Heart right ventricle (tissue), 16 donors: ENCODE measurements at regions of chr7 and their contacts with region 1.

Region 1: DNA sequence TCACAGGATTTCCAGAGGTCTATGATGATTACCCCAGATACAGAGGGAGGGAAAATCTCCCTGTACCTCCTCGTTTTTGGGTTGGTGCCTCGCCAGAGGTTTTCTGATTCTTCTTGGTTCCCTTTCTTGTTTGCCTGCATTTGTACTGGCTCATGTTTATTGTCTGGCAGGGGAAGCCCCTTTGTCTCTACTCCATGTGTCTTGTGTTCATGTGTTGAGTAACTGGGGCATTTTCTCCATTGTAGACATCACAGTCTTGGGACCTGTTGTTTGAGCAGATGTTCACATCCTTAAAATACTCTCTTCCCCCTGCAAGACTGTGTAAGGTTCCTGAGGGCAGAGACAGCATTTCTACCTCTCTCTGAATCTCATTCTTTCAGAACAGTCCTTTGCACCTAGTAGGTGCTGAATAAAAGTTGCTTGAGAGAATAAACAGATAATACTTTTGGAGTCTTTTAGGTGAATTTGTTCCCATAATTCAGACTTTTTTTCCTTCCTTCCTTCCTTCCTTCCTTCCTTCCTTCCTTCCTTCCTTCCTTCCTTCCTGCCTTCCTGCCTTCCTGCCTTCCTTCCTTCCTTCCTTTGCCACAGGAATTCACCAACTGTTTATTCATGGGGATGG is 25.1 kb downstream of the CDK14 start:
- DNase-seq: no peak
- ATAC-seq: peak in 1 of 8 donors; percentile 7
- H3K4me3 ChIP-seq: no peak overlapping the region
- H3K27ac ChIP-seq: no peak overlapping the region
- H3K4me1 ChIP-seq: peaks cover 4 to 59% (median 36%) of the 10 kb centered on the region in 9 donors
- H3K27me3 ChIP-seq: no peaks in the 10 kb centered on the region
- CTCF ChIP-seq: no peak

Region 2: GRCh38 chr7:90574146-90574819 is 47.0 kb before region 1 on chr7:
- intact Hi-C with region 1: loop called in 1 of 10 experiments (anchors 5 kb)
- DNase-seq: peak; percentile 26 to 52
- ATAC-seq: peak; percentile 83 to 98 (median 91)
- H3K4me3 ChIP-seq: no peak overlapping the region
- H3K27ac ChIP-seq: peak overlapping the region in 8 of 10 donors; percentile 18 to 76 (median 48)
- H3K4me1 ChIP-seq: peaks cover 0 to 19% (median 4%) of the 10 kb centered on the region in 9 donors
- H3K27me3 ChIP-seq: no peaks in the 10 kb centered on the region
- CTCF ChIP-seq: no peak

Region 3: DNA sequence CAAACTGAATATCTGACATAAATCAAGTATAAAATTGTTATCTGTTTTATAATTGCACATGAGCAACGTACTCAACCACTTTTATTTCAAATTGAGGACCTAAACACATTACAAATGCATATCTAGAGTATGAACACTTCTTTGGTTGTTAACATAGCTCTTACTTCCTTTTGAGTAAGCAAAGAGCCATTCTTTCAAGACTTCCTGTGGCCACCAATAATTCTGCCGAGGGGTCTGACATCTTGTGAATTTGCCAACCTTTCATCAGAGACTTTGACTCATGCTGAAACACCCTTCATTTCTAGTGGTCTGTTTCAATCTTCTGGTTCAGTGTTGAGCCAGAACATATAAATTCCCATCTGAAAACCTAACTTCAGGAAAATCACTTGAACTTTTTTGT is 34.3 kb after region 1 on chr7:
- intact Hi-C with region 1: no loop called
- DNase-seq: no peak
- ATAC-seq: no peak
- H3K4me3 ChIP-seq: no peak overlapping the region
- H3K27ac ChIP-seq: no peak overlapping the region
- H3K4me1 ChIP-seq: peaks cover 0 to 13% (median 7%) of the 10 kb centered on the region in 9 donors
- H3K27me3 ChIP-seq: no peaks in the 10 kb centered on the region
- CTCF ChIP-seq: no peak

Region 4: DNA sequence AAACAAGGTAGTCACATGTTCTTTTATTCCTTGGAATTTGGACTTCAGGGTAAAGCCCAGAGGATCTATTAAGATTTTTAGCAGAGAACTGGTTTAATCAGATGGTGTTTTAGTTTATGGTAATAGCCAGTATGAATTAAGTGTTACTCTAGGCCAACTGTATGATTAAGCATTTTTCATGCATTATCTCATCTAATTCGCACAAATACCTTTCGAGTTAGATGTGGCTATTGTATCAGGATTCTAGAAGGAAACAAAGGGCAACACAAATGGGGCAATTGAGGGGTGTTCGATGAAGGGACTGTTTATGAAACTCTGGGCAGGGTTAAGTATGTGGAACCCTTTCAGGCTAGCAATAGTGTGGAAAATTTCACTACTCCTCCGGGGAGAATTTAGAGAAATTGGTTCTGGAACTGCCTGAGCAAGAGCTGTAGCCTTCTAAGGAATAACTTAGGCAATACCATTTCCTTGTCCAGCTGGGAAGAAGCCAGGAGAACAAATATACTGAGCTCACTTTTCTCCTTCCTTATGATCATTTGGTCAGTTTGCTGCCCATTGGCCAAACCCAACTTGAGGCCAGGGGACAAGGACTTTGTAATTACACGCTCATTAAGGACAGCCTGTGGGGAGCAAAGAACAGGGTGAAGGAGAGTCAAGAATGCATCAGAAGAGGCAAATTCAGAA is 324.0 kb after region 1 on chr7:
- intact Hi-C with region 1: no loop called
- DNase-seq: peak in 1 of 2 donors; percentile 14
- ATAC-seq: peak in 7 of 8 donors; percentile 39 to 82 (median 65)
- H3K4me3 ChIP-seq: no peak overlapping the region
- H3K27ac ChIP-seq: peak overlapping the region in 3 of 10 donors; percentile 2 to 52 (median 23)
- H3K4me1 ChIP-seq: peaks cover 0 to 15% (median 0%) of the 10 kb centered on the region in 9 donors
- H3K27me3 ChIP-seq: no peaks in the 10 kb centered on the region
- CTCF ChIP-seq: no peak

Region 5: DNA sequence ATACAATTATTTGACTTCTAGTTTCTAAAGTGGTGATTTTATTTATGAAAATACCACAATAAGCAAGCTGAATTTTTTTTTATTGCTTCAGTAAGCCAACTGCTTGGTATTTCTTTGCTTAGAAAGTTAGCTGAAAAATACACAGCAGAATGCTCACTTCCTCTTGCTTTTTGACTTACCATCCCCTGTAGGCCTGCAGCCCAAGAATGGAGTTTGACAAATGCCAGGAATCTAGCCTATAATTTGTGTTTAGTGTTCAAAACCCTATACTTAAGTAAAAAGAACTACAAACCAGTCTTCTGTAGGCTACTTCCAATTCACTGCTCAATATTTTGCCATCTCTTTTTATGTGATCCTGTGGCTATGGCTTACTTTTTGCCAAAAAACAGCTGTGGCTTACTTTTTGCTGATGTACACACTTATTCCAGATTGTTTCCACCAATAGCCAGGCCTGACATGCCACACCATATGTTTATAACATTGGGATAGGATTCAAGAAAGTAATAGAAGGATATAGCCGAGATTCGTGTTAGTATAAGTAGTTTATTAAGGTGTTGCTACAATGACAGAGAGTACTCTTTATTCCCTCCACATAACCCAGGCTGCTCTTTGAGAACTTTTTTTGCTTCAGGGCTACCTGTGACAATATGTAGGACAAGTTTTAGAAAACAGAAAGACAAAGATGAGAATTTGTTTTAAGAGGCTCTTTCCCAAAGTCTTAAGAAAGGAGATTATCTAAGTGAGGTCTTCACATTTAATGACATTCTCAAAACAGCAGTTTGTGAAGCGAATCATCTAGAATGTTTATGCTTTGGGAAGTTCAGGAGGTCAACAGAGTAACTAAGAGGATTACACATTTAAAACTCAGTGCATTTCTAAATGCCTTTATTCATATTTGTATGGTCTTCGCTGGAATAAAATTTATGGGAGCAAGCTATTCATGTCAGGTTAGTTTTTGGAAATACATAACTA is 379.1 kb after region 1 on chr7:
- intact Hi-C with region 1: no loop called
- DNase-seq: no peak
- ATAC-seq: no peak
- H3K4me3 ChIP-seq: no peak overlapping the region
- H3K27ac ChIP-seq: no peak overlapping the region
- H3K4me1 ChIP-seq: peaks cover 0 to 17% (median 3%) of the 10 kb centered on the region in 9 donors
- H3K27me3 ChIP-seq: no peaks in the 10 kb centered on the region
- CTCF ChIP-seq: no peak

Region 6: DNA sequence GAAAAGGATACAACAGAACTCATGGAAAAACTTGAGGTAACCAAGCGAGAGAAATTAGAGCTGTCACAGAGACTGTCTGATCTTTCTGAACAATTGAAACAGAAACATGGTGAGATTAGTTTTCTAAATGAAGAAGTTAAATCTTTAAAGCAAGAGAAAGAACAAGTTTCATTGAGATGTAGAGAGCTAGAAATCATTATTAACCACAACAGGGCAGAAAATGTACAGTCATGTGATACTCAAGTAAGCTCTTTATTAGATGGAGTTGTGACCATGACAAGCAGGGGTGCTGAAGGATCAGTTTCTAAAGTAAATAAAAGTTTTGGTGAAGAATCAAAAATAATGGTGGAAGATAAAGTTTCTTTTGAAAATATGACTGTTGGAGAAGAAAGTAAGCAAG is 1381.5 kb after region 1 on chr7:
- intact Hi-C with region 1: no loop called
- DNase-seq: no peak
- ATAC-seq: no peak
- H3K4me3 ChIP-seq: no peak overlapping the region
- H3K27ac ChIP-seq: no peak overlapping the region
- H3K4me1 ChIP-seq: peaks cover 0 to 10% (median 0%) of the 10 kb centered on the region in 9 donors
- H3K27me3 ChIP-seq: no peaks in the 10 kb centered on the region
- CTCF ChIP-seq: no peak